MCF 10A (cell line): ENCODE measurements at regions of chr11 and their contacts with region 1.

Region 1: DNA sequence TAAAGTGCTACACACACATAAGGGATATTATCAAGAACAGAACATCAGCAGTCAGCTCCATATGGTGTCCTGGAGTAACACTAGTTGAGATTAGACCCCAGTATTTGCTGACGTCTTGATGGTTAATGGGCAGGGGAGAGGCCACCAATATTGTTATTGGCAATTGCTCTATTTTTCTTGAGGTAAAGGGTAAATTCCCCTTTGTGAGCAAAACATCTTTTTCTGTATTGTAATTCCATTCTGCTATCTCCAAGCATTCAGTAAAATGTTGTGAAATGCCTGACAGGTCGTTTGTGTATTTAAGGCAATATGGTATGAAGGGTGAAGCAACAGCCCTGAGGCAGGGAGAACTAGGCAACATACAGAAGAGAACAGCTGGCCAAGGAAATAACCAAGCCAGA is 21.9 kb downstream of the PC start:
- DNase-seq: peak; percentile 96
- H3K4me3 Mint-ChIP-seq: no peak overlapping the region
- H3K27ac Mint-ChIP-seq: peak overlapping the region; percentile 82
- H3K4me1 Mint-ChIP-seq: peaks cover 45% of the 10 kb centered on the region
- H3K27me3 Mint-ChIP-seq: no peaks in the 10 kb centered on the region
- CTCF ChIP-seq: no peak

Region 2: GRCh38 chr11:66855574-66856495 is 80.5 kb before region 1 on chr11:
- CTCF ChIA-PET with region 1: no interaction called
- POLR2A ChIA-PET with region 1: interaction called, 25 read pairs
- intact Hi-C with region 1: no loop called
- DNase-seq: peak; percentile 85
- H3K4me3 Mint-ChIP-seq: peak overlapping the region; percentile 86
- H3K27ac Mint-ChIP-seq: no peak overlapping the region
- H3K4me1 Mint-ChIP-seq: peaks cover 6% of the 10 kb centered on the region
- H3K27me3 Mint-ChIP-seq: no peaks in the 10 kb centered on the region
- CTCF ChIP-seq: no peak

Region 3: DNA sequence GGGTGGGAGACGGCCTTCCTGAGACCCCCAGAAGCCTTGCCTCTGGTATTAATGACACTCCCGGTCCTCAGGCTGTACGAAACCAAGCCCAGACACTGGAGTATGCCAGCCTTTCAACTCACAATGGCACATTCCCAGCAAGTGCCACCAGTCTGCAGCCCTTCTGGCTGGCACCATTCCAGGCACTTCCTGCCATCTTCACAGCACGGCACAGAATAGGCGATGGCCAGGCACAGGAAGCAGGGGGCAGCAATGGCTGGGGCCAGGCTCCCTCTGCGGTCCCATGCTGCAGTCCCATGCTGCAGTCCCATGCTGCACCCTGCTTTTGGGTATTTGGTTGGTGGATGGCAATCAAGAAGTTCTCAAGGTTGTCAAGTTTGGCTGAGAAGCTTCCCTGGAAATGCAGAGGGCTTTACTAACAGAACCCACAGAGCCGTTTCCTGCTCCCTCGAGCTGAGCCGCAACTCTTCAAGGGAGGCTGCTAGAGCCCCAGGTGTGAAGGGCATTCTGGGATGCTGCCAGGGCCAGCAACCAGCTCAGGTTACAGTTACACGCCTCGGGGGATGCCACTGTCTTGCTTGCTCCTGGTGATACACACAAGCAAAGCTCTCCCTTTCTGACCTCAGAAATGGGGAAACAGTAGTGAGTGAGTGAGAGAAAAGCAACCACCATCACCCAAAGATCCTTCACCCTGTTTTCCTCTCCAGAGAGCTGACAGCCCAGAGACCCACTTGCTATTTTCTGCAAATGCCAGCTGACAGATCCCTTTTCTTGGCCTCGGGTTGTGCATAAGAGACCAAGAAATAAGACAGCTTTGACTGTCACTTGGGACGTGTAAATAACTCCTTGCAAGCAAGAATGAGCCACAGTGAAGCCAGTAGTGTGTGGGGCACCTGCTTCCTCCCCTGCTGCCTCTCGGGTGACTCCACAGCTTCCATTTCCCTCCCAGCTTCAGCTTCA is 55.5 kb before region 1 on chr11:
- CTCF ChIA-PET with region 1: no interaction called
- POLR2A ChIA-PET with region 1: interaction called, 17 read pairs
- intact Hi-C with region 1: no loop called
- DNase-seq: peak; percentile 93
- H3K4me3 Mint-ChIP-seq: no peak overlapping the region
- H3K27ac Mint-ChIP-seq: peak overlapping the region; percentile 54
- H3K4me1 Mint-ChIP-seq: peaks cover 46% of the 10 kb centered on the region
- H3K27me3 Mint-ChIP-seq: no peaks in the 10 kb centered on the region
- CTCF ChIP-seq: no peak

Region 4: DNA sequence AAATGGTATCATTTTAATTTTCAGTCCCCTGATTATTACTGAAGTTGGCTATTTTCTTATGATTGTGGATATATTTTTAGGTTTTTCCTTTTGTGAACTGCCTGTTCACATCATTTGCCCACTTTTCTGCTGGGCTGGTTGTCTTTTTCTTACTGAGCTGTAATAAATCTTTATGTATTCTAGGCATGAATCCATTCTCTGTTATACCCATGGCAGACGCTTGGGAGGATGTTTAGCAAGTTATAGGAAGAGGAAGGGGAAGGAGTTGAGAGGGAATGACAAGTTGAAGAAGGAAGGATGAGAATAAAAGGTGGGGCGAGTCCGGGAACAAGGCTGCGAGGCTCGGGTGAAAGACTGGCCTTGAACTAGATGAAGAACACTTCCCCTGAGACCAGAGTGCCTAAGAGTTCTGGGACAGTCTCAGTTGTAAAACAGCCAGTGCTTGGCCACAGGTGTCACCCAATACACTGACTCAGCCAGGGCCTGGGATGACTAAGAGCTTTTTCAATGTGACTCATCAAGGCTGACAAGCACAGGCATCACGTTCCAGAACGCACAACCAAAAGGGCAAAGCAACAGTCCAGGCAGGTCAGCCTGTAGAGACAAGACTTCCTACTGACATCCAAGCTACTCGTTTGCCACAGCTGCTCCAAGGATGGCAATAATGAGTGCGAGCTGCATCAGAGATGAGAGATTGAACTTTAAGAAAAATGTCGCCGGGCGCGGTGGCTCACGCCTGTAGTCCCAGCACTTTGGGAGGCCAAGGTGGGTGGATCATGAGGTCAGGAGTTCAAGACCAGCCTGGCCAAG is 44.3 kb before region 1 on chr11:
- CTCF ChIA-PET with region 1: interaction called, 4 read pairs
- POLR2A ChIA-PET with region 1: interaction called, 46 read pairs
- intact Hi-C with region 1: no loop called
- DNase-seq: peak; percentile 98
- H3K4me3 Mint-ChIP-seq: peak overlapping the region; percentile 61
- H3K27ac Mint-ChIP-seq: peak overlapping the region; percentile 92
- H3K4me1 Mint-ChIP-seq: peaks cover 23% of the 10 kb centered on the region
- H3K27me3 Mint-ChIP-seq: no peaks in the 10 kb centered on the region
- CTCF ChIP-seq: no peak

Region 5: GRCh38 chr11:66950113-66950535 is 13.8 kb after region 1 on chr11:
- CTCF ChIA-PET with region 1: interaction called, 3 read pairs
- POLR2A ChIA-PET with region 1: interaction called, 62 read pairs
- intact Hi-C with region 1: no loop called
- DNase-seq: peak; percentile 67
- H3K4me3 Mint-ChIP-seq: no peak overlapping the region
- H3K27ac Mint-ChIP-seq: peak overlapping the region; percentile 18
- H3K4me1 Mint-ChIP-seq: peaks cover 17% of the 10 kb centered on the region
- H3K27me3 Mint-ChIP-seq: no peaks in the 10 kb centered on the region
- CTCF ChIP-seq: no peak

Region 6: GRCh38 chr11:66970808-66971442 is 34.6 kb after region 1 on chr11:
- CTCF ChIA-PET with region 1: interaction called, 5 read pairs
- POLR2A ChIA-PET with region 1: interaction called, 42 read pairs
- intact Hi-C with region 1: no loop called
- DNase-seq: peak; percentile 100
- H3K4me3 Mint-ChIP-seq: peak overlapping the region; percentile 7
- H3K27ac Mint-ChIP-seq: peak overlapping the region; percentile 87
- H3K4me1 Mint-ChIP-seq: peaks cover 56% of the 10 kb centered on the region
- H3K27me3 Mint-ChIP-seq: no peaks in the 10 kb centered on the region
- CTCF ChIP-seq: no peak